Transverse colon (tissue), 4 donors: ENCODE measurements at regions of chr13 and their contacts with region 1.

Region 1: GRCh38 chr13:30422054-30422839 is at the start of gene UBE2L5:
- DNase-seq: peak; percentile 79
- H3K4me3 ChIP-seq: peak within 1 kb of the TSS; percentile 43 to 66 (median 54)
- H3K27ac ChIP-seq: peak within 1 kb of the TSS; percentile 91 to 98 (median 94)
- H3K4me1 ChIP-seq: peaks cover 9 to 20% (median 9%) of the 10 kb centered on the region in 4 donors
- H3K27me3 ChIP-seq: no peaks in the 10 kb centered on the region
- CTCF ChIP-seq: no peak
- EP300 ChIP-seq: no peak
- POLR2A ChIP-seq: peak; percentile 66
- total RNA-seq, gene UBE2L5: not detected

Region 2: GRCh38 chr13:29817604-29818378 is 604.5 kb before region 1 on chr13:
- in situ Hi-C with region 1: no loop called
- intact Hi-C with region 1: no loop called
- DNase-seq: no peak
- H3K4me3 ChIP-seq: no peak overlapping the region
- H3K27ac ChIP-seq: no peak overlapping the region
- H3K4me1 ChIP-seq: peaks cover 0 to 35% (median 17%) of the 10 kb centered on the region in 4 donors
- H3K27me3 ChIP-seq: no peaks in the 10 kb centered on the region
- CTCF ChIP-seq: no peak
- EP300 ChIP-seq: no peak
- POLR2A ChIP-seq: no peak

Region 3: DNA sequence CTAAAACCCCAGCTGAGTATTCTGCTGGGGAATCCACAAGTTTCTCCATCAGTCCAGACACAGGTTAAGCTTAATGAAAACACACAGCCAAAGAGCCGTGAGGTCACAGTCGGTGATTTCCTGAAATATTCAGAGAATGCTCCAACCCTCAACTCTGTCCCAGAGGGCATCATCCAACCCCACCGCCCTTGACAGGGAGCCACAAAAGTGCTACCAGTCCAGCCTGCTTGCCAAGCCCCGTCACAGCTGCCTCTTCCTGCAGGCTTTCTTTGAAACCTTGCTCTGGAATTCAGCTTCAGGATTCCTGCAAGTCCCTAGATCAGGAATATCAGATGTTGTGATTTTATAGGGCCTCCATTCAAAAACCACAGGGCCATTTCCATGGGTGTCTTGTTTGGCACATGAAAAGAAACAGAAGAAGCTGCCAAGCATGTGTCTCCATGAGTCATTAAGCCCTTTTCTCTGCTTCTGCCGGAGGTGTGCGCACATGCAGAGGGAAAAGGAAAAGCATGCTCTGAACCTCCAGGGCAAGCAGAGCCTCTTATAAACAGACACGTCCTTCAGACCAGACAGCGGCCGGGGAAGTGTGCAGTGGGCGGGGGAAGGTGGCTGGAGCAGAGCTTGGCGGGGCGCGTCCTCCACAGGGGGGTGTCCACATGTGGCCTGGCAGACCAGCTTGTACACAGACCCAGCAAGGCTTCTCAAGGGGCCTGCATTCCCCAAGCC is 279.6 kb before region 1 on chr13:
- in situ Hi-C with region 1: no loop called
- intact Hi-C with region 1: no loop called
- DNase-seq: peak; percentile 34
- H3K4me3 ChIP-seq: no peak overlapping the region
- H3K27ac ChIP-seq: peak overlapping the region; percentile 54 to 79 (median 62)
- H3K4me1 ChIP-seq: peaks cover 10 to 24% (median 15%) of the 10 kb centered on the region in 4 donors
- H3K27me3 ChIP-seq: no peaks in the 10 kb centered on the region
- CTCF ChIP-seq: no peak
- EP300 ChIP-seq: no peak
- POLR2A ChIP-seq: no peak

Region 4: DNA sequence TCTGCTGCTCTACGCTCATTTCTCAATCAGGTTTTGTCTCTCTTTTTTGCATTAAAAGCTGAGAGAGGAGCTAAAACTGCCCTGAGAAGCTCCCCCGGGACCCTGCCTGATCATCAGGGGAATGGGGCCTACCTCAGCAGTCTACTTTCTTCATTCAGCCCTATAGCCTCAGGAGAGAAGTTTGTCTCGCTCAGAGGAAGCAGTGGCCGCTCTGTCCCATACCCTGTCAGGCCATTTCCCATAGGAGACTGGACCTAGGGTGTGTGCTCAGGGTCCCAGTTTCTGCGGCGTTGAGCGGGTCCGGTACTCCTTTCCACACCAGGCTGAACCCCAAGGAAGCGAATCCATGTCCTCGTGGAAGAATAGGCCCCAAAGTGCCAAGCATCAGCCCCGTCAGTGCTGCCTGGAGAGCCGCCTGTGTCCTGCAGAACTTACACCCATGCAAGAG is 21.7 kb after region 1 on chr13:
- in situ Hi-C with region 1: no loop called
- intact Hi-C with region 1: loop called (anchors 1 kb)
- DNase-seq: no peak
- H3K4me3 ChIP-seq: no peak overlapping the region
- H3K27ac ChIP-seq: no peak overlapping the region
- H3K4me1 ChIP-seq: peaks cover 9 to 15% (median 12%) of the 10 kb centered on the region in 4 donors
- H3K27me3 ChIP-seq: no peaks in the 10 kb centered on the region
- CTCF ChIP-seq: no peak
- EP300 ChIP-seq: no peak
- POLR2A ChIP-seq: no peak